OCI-LY7 (cell line): ENCODE measurements at regions of chr4 and their contacts with region 1.

Region 1: GRCh38 chr4:143431526-143432257 is 81.8 kb upstream of the SMARCA5 start:
- DNase-seq: no peak
- H3K4me3 ChIP-seq: no peak overlapping the region
- H3K27ac ChIP-seq: peak overlapping the region; percentile 5
- H3K4me1 ChIP-seq: peaks cover 57% of the 10 kb centered on the region
- CTCF ChIP-seq: no peak

Region 2: GRCh38 chr4:143389579-143390195 is 42.0 kb before region 1 on chr4:
- CTCF ChIA-PET with region 1: no interaction called
- POLR2A ChIA-PET with region 1: interaction called, 18 read pairs
- intact Hi-C with region 1: no loop called
- DNase-seq: no peak
- H3K4me3 ChIP-seq: peak overlapping the region; percentile 5
- H3K27ac ChIP-seq: peak overlapping the region; percentile 96
- H3K4me1 ChIP-seq: peaks cover 80% of the 10 kb centered on the region
- CTCF ChIP-seq: no peak

Region 3: DNA sequence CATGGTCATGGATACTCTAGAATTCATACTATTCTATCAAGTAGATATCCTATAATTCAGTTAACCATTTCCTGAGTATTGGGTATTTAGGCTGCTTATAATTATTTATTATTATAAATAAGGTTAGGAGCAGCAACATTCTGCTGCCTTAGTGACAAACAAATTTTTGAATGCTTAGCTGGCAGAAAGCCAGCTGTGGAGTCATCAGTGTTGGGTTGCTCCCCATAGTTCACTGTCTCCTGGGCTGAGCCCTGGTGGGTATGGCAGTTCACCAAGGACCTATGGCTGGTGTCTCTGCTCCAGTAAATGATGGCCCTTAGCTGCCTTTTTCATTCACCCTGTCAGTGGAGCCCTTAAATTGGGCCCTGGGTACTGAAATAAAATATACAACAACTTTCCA is 143.6 kb after region 1 on chr4:
- CTCF ChIA-PET with region 1: no interaction called
- POLR2A ChIA-PET with region 1: no interaction called
- intact Hi-C with region 1: no loop called
- DNase-seq: no peak
- H3K4me3 ChIP-seq: no peak overlapping the region
- H3K27ac ChIP-seq: no peak overlapping the region
- H3K4me1 ChIP-seq: no peaks in the 10 kb centered on the region
- CTCF ChIP-seq: no peak